ENCODE measurements at regions of chr3 and their contacts with region 1.

Region 1: DNA sequence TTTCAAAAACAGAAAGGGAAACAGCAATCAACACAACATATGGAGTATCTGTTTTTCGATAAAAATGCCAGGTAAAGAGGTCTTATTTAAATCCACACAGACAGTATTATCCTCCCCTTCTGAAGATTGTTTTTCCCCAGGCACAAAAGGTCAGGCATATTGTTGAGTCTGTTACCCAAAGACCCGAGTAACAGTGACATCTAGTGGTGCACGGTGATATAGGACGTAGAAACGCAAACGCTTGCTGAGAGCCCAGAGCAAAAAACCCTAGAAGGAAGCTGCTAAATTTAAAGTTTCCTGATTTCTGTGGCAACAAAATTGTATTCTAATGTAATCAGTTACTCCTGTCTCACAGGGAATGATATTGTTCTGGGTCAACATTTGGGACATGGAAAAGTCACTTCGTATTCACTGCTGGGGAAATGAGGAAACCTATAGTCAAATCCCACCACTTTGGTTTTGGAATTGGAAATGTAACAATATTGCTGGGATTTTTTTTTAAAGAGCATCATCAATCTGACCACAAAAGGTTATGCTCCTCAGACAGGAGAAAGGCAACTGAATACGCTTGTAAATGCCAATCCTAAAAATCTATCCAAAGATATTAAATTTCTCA is 312.7 kb upstream of the CCDC54 start:
- DNase-seq: peak; percentile 21 to 44
- ATAC-seq: peak; percentile 81 to 92
- H3K4me3 ChIP-seq: no peak overlapping the region
- H3K27ac ChIP-seq: no peak overlapping the region
- H3K4me1 ChIP-seq: peaks cover 0 to 3% of the 10 kb centered on the region in 2 donors
- H3K27me3 ChIP-seq: no peaks in the 10 kb centered on the region
- CTCF ChIP-seq: peak; percentile 29 to 80 (median 53)
- POLR2A ChIP-seq: no peak

Region 2: DNA sequence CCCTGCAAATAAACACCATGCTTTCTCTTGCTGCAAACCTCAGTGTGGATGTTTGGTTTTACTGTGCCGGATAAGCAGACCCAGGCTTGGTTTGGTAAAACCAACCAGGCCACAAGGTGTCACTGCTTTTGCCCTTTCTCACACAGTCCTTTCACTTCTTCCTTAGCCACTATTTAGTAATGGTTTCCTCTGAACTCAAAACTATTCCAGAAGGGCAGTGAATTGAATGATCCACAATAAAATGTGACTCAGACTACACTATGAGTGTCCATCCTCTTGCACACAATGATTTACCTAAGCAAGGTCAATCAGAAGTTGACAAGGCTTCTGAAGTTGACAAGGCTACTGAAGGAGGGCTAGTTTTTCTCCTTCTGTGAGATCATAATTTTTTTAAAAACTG is 239.7 kb before region 1 on chr3:
- in situ Hi-C with region 1: no loop called
- intact Hi-C with region 1: loop called (anchors 10 kb)
- DNase-seq: no peak
- ATAC-seq: no peak
- H3K4me3 ChIP-seq: no peak overlapping the region
- H3K27ac ChIP-seq: no peak overlapping the region
- H3K4me1 ChIP-seq: no peaks in the 10 kb centered on the region
- H3K27me3 ChIP-seq: no peaks in the 10 kb centered on the region
- CTCF ChIP-seq: no peak
- POLR2A ChIP-seq: no peak

Region 3: GRCh38 chr3:107045791-107046190 is 18.8 kb before region 1 on chr3:
- in situ Hi-C with region 1: no loop called
- intact Hi-C with region 1: no loop called
- DNase-seq: no peak
- ATAC-seq: no peak
- H3K4me3 ChIP-seq: no peak overlapping the region
- H3K27ac ChIP-seq: no peak overlapping the region
- H3K4me1 ChIP-seq: no peaks in the 10 kb centered on the region
- H3K27me3 ChIP-seq: no peaks in the 10 kb centered on the region
- CTCF ChIP-seq: no peak
- POLR2A ChIP-seq: no peak

Region 4: GRCh38 chr3:107092121-107092520 is 27.6 kb after region 1 on chr3:
- in situ Hi-C with region 1: no loop called
- intact Hi-C with region 1: no loop called
- DNase-seq: no peak
- ATAC-seq: no peak
- H3K4me3 ChIP-seq: no peak overlapping the region
- H3K27ac ChIP-seq: no peak overlapping the region
- H3K4me1 ChIP-seq: no peaks in the 10 kb centered on the region
- H3K27me3 ChIP-seq: no peaks in the 10 kb centered on the region
- CTCF ChIP-seq: no peak
- POLR2A ChIP-seq: no peak